Tibial artery (tissue), 4 donors: ENCODE measurements at regions of chr6 and their contacts with region 1.

Region 1: DNA sequence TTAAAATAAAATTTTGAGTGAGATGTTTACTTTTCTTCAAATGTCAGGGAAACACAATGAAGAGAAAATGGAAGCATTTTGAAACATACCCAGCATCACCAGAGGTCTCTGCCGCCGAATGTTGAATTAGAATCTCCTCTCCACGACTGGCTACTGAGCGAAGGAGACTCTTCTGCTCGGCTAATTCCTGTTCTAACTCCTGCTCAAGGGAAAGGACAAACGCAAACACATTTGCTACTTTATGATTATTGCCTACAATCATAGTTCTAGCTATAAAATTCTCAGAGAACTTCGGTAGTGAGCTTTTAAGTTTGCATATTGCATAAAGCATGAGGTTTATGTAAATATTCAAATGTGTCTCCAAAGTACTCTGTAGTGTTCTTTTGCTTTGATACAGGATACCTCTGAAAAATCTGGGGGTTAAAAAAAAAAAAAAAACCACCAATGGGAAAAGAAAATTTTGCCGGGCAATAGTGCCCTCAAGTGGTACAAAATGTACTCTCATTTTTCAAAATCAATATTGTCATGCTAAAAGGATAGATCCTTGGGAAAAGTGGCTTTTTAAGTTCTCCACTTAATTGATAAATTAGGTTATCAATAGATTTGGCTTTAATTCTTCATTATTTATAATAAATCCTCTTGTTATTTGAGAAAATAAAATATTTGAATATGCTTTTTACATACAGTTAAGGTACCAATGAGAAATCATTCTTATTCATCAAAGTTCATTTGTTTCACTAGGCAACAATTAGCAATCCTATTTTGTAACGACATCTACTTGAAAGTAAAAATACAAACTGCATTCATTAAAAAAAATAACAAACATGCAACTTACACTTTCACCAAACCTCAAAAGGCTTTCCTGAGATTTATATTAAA is 369.0 kb downstream of the SYNE1 start:
- DNase-seq: no peak
- H3K4me3 ChIP-seq: no peak overlapping the region
- H3K27ac ChIP-seq: peak overlapping the region; percentile 59 to 62
- H3K4me1 ChIP-seq: peaks cover 0 to 77% (median 42%) of the 10 kb centered on the region in 4 donors
- H3K27me3 ChIP-seq: no peaks in the 10 kb centered on the region
- CTCF ChIP-seq: peak; percentile 47 to 49

Region 2: GRCh38 chr6:151765444-151765886 is 502.7 kb before region 1 on chr6:
- intact Hi-C with region 1: loop called (anchors 10 kb)
- DNase-seq: peak in 1 of 2 donors; percentile 65
- H3K4me3 ChIP-seq: no peak overlapping the region
- H3K27ac ChIP-seq: no peak overlapping the region
- H3K4me1 ChIP-seq: peaks cover 3 to 10% (median 6%) of the 10 kb centered on the region in 4 donors
- H3K27me3 ChIP-seq: no peaks in the 10 kb centered on the region
- CTCF ChIP-seq: peak; percentile 74 to 80

Region 3: DNA sequence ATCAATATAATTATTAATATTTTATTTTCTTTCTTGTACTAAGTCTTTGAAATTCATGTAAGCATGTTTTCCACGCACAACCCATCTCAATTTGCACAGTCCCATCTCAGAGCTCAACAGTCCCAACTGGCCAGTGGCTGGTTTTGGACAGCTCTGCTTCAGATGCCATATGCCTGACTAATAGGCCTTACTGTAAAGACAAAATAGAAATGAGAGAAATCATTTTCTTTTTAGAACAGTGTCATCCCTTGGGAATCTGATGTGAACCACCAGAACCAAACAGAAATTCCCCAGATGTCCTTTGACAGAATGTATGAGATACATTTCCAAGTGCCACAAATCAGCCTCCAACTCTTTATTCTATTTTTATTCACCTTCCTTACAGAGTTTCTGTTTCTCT is 121.8 kb before region 1 on chr6:
- intact Hi-C with region 1: loop called (anchors 10 kb)
- DNase-seq: no peak
- H3K4me3 ChIP-seq: no peak overlapping the region
- H3K27ac ChIP-seq: no peak overlapping the region
- H3K4me1 ChIP-seq: peaks cover 0 to 26% (median 3%) of the 10 kb centered on the region in 4 donors
- H3K27me3 ChIP-seq: no peaks in the 10 kb centered on the region
- CTCF ChIP-seq: no peak